ENCODE measurements at regions of chr17 and their contacts with region 1.

Region 1: DNA sequence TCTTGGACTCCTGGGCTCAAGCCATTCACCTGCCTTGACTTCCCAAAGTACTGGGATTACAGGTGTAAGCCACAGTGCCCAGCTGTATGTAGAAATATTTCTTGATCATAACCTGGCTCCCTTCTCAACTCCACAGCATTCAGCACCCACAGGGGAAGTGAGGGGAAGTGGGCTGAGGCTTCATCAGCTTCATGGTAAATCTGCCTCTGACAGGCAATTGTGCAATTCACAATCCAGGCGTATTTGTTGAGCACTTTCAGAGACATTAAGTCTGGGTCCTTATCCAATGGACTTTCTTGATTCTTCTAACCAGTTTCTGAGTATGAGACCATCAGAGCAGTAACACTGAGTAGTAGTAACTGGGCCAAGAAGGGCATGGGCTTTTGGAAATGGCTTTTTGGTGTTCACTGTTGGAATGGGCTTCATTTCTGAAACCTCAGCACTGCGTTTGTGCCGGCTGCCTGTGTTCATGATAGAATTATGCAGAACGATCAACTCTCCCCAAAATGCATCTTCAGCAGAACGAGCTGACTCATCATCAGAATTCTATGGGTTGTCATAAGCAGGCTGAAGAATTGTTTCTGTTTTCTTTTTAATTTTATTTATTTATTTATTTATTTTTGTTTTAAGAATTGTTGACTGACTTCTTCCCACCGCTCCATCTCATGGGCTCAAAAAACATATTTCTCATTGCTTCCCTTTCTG is 28.9 kb downstream of the FAM20A start:
- DNase-seq: no peak
- ATAC-seq: no peak
- H3K4me3 ChIP-seq: no peak overlapping the region
- H3K27ac ChIP-seq: no peak overlapping the region
- H3K4me1 ChIP-seq: no peaks in the 10 kb centered on the region
- H3K27me3 ChIP-seq: no peaks in the 10 kb centered on the region
- CTCF ChIP-seq: no peak
- POLR2A ChIP-seq: no peak
- RAD21 ChIP-seq: no peak

Region 2: GRCh38 chr17:68368387-68368786 is 203.9 kb before region 1 on chr17:
- CTCF ChIA-PET with region 1: no interaction called
- POLR2A ChIA-PET with region 1: no interaction called
- RAD21 ChIA-PET with region 1: no interaction called
- intact Hi-C with region 1: no loop called
- DNase-seq: no peak
- ATAC-seq: peak; percentile 59
- H3K4me3 ChIP-seq: no peak overlapping the region
- H3K27ac ChIP-seq: no peak overlapping the region
- H3K4me1 ChIP-seq: peaks cover 0 to 8% of the 10 kb centered on the region in 2 experiments; a peak in 1 of 4 replicates
- H3K27me3 ChIP-seq: no peaks in the 10 kb centered on the region
- CTCF ChIP-seq: no peak
- POLR2A ChIP-seq: no peak
- RAD21 ChIP-seq: no peak

Region 3: DNA sequence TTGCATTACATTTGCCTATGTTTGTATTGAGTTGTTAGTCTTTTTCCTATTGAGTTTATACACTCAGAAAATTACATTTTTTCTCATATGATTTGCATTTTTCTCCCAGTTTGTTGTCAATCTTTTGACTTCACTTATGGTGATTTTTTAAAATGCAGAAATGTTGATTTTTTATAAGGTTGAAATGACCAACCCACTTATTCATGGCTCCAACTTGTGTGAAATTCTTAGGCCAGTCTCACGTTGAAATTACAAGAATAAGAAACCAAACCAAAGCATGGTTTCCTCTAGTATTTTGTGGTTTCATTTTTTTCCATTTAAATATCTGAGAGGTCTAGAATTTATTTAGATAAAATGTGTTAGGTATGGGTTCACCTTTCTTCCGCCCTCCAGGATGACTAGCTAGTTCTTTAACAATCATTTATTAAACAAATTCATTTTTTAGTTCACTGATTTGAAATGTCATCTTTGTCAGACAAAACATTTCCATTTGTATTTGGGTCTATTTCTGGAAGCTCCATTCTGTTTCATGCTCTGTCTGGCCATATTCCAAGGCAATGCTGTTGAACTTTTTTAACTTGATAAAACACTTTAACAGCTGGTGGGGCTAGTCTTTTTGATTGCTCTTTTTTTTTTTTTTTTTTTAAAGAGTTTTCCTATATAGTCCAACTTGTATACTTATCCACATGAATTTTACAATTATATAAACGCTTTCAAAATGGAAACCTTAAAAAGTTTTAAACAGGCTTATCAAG is 11.1 kb before region 1 on chr17:
- CTCF ChIA-PET with region 1: no interaction called
- POLR2A ChIA-PET with region 1: no interaction called
- RAD21 ChIA-PET with region 1: no interaction called
- intact Hi-C with region 1: no loop called
- DNase-seq: no peak
- ATAC-seq: no peak
- H3K4me3 ChIP-seq: no peak overlapping the region
- H3K27ac ChIP-seq: no peak overlapping the region
- H3K4me1 ChIP-seq: no peaks in the 10 kb centered on the region
- H3K27me3 ChIP-seq: no peaks in the 10 kb centered on the region
- CTCF ChIP-seq: no peak
- POLR2A ChIP-seq: no peak
- RAD21 ChIP-seq: no peak

Region 4: GRCh38 chr17:68600067-68600930 is 28.0 kb after region 1 on chr17:
- CTCF ChIA-PET with region 1: no interaction called
- POLR2A ChIA-PET with region 1: no interaction called
- RAD21 ChIA-PET with region 1: no interaction called
- intact Hi-C with region 1: no loop called
- DNase-seq: no peak
- ATAC-seq: no peak
- H3K4me3 ChIP-seq: no peak overlapping the region
- H3K27ac ChIP-seq: no peak overlapping the region
- H3K4me1 ChIP-seq: no peaks in the 10 kb centered on the region
- H3K27me3 ChIP-seq: no peaks in the 10 kb centered on the region
- CTCF ChIP-seq: no peak
- POLR2A ChIP-seq: no peak
- RAD21 ChIP-seq: no peak

Region 5: DNA sequence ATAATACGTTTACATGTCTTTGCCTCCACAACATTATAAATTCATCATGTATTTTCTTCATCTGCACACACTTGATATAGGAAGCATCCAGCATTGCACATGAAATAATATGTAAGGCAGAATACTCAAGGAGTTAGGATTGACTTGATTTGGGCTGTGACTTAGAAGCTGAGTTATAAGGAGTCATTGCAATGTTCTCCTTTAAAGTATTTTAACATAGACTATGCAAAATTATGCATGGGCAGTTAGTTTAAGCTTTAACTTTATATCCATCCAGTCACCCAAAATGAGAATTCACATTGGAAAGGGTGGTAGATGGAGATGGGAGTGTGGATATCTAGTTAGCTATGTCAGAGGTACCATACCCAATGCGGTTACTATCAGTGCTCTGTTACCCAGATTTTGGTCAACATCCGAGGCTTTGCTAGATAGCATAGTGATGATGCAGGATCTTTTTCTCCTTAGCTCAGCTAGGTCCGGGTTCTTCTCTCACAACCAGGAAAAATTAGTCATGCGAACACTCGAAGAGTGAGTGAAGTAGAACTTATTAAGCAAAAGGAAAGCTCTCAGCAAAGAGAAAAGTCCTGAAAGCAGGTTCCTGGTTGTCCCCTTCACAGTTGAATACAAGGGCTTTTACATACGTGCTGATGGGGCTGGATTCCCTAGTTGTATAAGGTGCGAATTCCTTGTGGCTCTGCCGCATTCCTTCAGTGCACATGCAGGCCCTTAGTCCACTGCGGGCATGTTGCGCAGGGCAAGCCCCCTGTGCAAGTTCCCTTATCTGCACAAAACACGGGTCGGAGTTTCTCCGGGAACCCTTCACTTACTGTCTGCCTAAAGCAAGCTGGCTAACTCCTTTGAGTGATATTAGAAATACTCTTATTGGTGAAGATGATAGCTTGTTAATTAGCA is 102.0 kb after region 1 on chr17:
- CTCF ChIA-PET with region 1: no interaction called
- POLR2A ChIA-PET with region 1: no interaction called
- RAD21 ChIA-PET with region 1: no interaction called
- intact Hi-C with region 1: loop called (anchors 5 kb)
- DNase-seq: no peak
- ATAC-seq: no peak
- H3K4me3 ChIP-seq: no peak overlapping the region
- H3K27ac ChIP-seq: no peak overlapping the region
- H3K4me1 ChIP-seq: no peaks in the 10 kb centered on the region
- H3K27me3 ChIP-seq: 0 out of 2 replicates have a peak, but pooled peaks cover 4% of the 10 kb centered on the region
- CTCF ChIP-seq: no peak
- POLR2A ChIP-seq: no peak
- RAD21 ChIP-seq: no peak